HCT116 (cell line): ENCODE measurements at regions of chr2 and their contacts with region 1.

Region 1: GRCh38 chr2:143034292-143035074 is 94.7 kb upstream of the ARHGAP15 start:
- DNase-seq: peak; percentile 67
- ATAC-seq: peak; percentile 84
- H3K4me3 ChIP-seq: no peak overlapping the region
- H3K27ac ChIP-seq: no peak overlapping the region
- H3K4me1 ChIP-seq: no peaks in the 10 kb centered on the region
- H3K27me3 ChIP-seq: no peaks in the 10 kb centered on the region
- CTCF ChIP-seq: peak; percentile 82 to 98 (median 97)
- POLR2A ChIP-seq: no peak
- RAD21 ChIP-seq: peak; percentile 72

Region 2: DNA sequence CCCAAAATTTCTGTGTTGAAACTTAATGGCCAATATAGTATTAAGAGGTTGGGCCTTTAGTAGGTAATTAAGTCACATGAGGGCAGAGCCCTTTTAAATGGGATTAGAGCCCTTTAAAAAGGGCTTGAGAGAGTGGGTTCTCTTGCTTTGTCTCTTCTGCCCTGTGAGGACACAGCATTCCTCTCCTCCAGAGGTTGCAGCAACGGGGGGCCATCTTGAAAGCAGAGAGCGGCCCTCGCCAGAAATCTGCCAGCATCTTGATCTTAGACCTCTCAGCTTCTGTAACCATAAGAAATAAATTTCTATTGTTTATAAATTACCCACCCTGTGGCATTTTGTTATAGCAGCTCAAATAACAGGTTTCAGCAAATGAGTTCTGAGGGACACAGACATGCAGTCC is 598.6 kb before region 1 on chr2:
- CTCF ChIA-PET with region 1: no interaction called
- POLR2A ChIA-PET with region 1: no interaction called
- RAD21 ChIA-PET with region 1: no interaction called
- intact Hi-C with region 1: no loop called
- DNase-seq: no peak
- ATAC-seq: no peak
- H3K4me3 ChIP-seq: no peak overlapping the region
- H3K27ac ChIP-seq: no peak overlapping the region
- H3K4me1 ChIP-seq: no peaks in the 10 kb centered on the region
- H3K27me3 ChIP-seq: no peaks in the 10 kb centered on the region
- CTCF ChIP-seq: no peak
- POLR2A ChIP-seq: no peak
- RAD21 ChIP-seq: no peak

Region 3: DNA sequence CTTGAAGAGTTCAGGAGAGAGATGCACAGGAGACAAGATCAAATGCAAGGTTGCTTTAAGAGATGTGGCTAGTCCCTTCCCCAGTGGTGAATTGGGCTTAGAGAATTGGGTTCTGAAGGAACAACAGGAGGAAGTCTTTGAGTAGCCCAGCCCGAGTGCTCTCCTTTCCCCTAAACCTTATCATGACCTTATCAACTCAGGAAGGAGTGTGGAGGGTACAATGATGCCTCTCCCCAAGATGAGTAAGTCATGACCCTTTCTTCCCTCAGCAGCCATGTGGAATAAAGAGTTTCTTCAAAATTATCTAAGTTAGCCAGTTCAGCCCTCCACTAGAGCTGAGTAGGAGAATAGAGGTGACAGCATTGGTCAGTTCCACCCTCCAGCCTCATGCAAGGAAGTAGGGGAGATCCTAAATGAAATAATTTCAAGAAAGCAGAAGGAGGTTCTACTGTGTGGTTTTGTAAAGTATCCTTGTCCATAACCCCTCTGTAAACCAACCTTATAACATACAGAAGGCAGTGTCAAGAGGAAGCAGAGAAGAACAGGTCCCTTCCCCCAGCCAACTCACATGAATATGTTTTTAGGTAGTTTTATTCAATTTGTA is 183.1 kb after region 1 on chr2:
- CTCF ChIA-PET with region 1: interaction called, 5 read pairs
- POLR2A ChIA-PET with region 1: no interaction called
- RAD21 ChIA-PET with region 1: no interaction called
- intact Hi-C with region 1: loop called (anchors 1 kb)
- DNase-seq: no peak
- ATAC-seq: no peak
- H3K4me3 ChIP-seq: no peak overlapping the region
- H3K27ac ChIP-seq: no peak overlapping the region
- H3K4me1 ChIP-seq: no peaks in the 10 kb centered on the region
- H3K27me3 ChIP-seq: no peaks in the 10 kb centered on the region
- CTCF ChIP-seq: no peak
- POLR2A ChIP-seq: no peak
- RAD21 ChIP-seq: no peak